ENCODE measurements at regions of chr2 and their contacts with region 1.

Region 1: DNA sequence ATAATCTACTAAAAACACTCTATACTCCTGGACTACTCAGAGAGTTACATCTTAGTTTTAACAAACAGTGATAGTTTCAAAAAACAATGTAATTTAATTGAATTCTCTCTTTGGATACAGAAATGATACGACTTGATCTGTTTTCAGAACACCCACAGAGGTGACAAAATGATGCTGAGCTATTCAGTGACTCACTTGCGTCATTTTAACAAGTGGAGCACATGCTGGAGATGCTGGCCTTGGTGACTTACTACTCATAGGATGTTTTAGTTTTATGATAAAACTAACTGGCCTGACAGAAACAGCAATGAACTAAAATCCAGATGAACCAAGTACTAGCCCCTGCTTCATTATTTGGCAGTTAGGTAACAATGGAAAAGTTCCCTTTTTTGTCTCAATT is 101.3 kb upstream of the ITGB6 start:
- DNase-seq: no peak
- ATAC-seq: no peak
- H3K4me3 ChIP-seq: no peak overlapping the region
- H3K27ac ChIP-seq: no peak overlapping the region
- H3K4me1 ChIP-seq: no peaks in the 10 kb centered on the region
- H3K27me3 ChIP-seq: no peaks in the 10 kb centered on the region
- CTCF ChIP-seq: no peak

Region 2: DNA sequence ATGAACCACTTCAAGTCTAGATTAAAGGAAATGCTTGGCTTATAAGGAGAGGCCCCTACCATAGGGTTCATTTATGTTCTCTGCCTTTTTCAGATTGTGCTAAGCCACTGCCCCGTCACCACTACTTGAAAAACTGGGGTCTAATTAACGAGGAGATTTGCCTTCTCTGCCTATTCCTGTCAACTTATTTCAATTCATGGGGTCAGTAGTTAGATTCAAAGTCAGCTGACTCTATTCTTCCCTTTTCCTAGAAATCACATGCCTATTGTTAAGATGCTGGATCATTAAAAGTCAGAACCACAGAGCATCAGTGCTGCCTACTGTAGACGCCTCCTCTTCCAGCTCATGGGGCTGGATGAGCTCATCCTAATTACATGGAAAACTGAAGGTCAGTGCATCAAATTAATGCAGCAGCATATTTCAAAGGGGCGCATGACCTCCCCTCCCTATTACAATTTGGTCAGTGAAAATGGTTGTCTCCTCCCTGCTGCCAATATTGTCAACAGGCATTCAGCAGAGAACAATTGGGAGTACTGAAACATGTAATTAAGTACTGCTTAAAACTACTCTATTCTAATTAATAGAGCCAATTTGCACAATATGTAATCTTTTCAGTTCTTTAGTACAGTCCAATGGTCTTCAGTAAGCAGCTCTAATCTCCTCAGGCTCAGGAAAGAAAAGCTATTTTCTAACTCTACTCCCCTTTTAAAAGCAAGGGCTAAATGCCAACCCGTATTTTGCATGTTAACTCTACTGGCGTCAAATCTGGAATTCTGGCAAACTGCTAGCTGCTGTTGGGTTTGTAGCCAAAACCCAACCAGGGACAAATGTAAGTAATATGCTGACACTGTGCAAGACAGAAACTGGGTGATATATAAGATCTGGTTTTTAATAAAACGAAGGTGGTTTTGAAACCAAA is 16.0 kb after region 1 on chr2:
- CTCF ChIA-PET with region 1: interaction called, 6 read pairs
- POLR2A ChIA-PET with region 1: interaction called, 17 read pairs
- in situ Hi-C with region 1: no loop called
- intact Hi-C with region 1: no loop called
- DNase-seq: no peak
- ATAC-seq: no peak
- H3K4me3 ChIP-seq: no peak overlapping the region
- H3K27ac ChIP-seq: no peak overlapping the region
- H3K4me1 ChIP-seq: no peaks in the 10 kb centered on the region
- H3K27me3 ChIP-seq: no peaks in the 10 kb centered on the region
- CTCF ChIP-seq: no peak